Ascending aorta (tissue), 2 donors: ENCODE measurements at regions of chr9 and their contacts with region 1.

Region 1: GRCh38 chr9:35680331-35681105 is 6.8 kb downstream of the CA9 start:
- DNase-seq: no peak
- H3K4me3 ChIP-seq: no peak overlapping the region
- H3K27ac ChIP-seq: peak overlapping the region; percentile 54 to 97
- H3K4me1 ChIP-seq: peaks cover 20 to 48% of the 10 kb centered on the region in 2 donors
- H3K27me3 ChIP-seq: no peaks in the 10 kb centered on the region
- CTCF ChIP-seq: no peak

Region 2: GRCh38 chr9:35664531-35665470 is 15.7 kb before region 1 on chr9 and contains the start of gene ARHGEF39:
- intact Hi-C with region 1: loop called (anchors 2 kb)
- DNase-seq: peak in 1 of 2 donors; percentile 91
- H3K4me3 ChIP-seq: peak within 1 kb of the TSS; percentile 58 to 69
- H3K27ac ChIP-seq: peak within 1 kb of the TSS; percentile 97 to 100
- H3K4me1 ChIP-seq: peaks cover 15 to 28% of the 10 kb centered on the region in 2 donors
- H3K27me3 ChIP-seq: no peaks in the 10 kb centered on the region
- CTCF ChIP-seq: no peak
- total RNA-seq, gene ARHGEF39: 1.1 TPM

Region 3: DNA sequence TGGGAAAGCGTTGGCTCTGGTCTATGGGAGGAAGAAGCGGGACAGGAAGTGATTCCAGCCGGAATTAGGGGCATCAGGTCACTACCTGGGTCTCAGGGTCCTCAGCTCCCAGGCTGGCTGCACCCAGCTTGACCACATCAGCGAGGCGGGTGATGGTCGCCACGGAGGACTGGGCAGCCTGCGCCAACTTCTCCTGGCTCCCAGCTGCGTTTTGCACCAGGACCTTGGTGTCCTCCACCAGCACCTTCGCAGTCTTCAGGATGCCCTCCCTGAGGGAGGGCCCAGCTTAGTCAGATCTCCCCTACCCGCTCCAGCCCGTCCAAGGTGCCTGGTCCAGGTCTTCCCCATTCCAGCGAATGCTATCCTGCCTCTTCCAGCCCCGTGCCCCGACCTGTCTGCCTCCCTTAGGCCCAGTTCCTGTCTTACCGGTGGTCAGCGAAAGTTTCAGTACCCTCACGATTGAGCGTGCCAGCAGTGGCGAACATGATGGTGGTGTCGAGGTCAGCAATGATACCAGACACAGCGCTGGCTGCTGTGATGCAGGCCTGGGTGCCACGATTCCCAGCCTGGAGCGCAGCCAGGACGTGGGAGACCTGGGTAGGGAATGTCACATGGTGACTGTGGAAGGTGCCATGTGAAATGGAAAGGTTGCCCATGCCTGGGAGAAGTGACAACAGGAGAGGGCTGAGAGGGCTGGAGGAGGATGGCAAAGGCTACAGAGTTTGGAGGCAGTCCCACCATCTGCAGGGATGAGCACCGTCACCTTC is 23.6 kb after region 1 on chr9:
- intact Hi-C with region 1: loop called (anchors 2 kb)
- DNase-seq: no peak
- H3K4me3 ChIP-seq: no peak overlapping the region
- H3K27ac ChIP-seq: peak overlapping the region in 1 of 2 donors; percentile 93
- H3K4me1 ChIP-seq: no peaks in the 10 kb centered on the region
- H3K27me3 ChIP-seq: no peaks in the 10 kb centered on the region
- CTCF ChIP-seq: no peak

Region 4: GRCh38 chr9:35771534-35771933 is 91.0 kb after region 1 on chr9:
- intact Hi-C with region 1: no loop called
- DNase-seq: no peak
- H3K4me3 ChIP-seq: no peak overlapping the region
- H3K27ac ChIP-seq: peak overlapping the region; percentile 39 to 56
- H3K4me1 ChIP-seq: peaks cover 6 to 13% of the 10 kb centered on the region in 2 donors
- H3K27me3 ChIP-seq: no peaks in the 10 kb centered on the region
- CTCF ChIP-seq: no peak